ENCODE measurements at regions of chr3 and their contacts with region 1.

Region 1: DNA sequence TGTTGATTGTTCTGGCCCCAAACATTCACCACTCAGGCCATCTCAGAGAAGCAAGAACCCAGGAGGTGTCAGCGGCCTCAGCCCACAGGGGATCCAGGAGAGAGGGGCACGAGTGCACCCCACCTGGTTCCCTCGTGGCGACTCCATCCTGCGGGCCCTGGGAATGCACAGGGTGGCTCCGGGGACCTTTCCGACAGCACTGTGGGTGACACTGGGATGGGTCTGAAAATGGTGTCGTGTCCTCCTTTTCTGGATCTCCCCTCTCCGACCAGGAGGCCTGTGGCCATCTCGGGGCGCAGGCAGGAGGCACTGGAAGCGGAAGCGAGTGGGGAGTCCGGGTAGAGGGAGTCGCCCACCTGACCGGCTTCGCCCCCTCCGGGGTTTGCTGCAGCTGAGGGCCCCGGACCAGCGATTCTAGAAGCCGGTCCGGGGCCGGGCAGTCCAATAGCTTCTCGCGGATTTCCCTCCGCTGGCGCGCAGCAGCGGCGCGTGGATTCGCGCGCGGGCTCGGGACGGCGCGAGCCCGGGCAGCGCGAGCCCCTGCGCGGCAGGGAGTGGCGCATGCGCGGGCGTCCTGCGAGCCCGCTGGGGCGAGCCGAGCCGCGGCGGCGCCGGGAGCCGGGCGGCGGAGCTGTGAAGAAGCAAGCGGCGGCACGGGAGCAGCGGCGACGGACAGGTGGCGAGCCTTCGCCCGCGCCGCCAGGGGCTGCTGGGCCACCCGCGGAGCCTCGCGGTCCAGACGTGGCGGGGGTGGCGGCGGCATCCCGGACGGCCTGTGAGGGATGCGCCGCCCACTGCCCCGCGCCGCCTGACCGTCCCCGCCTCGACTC is at the start of gene DOCK3:
- DNase-seq: peak; percentile 79
- ATAC-seq: peak; percentile 91
- H3K4me3 Mint-ChIP-seq: peak within 1 kb of the TSS; percentile 69
- H3K27ac Mint-ChIP-seq: peak within 1 kb of the TSS; percentile 55
- H3K4me1 Mint-ChIP-seq: peaks cover 10% of the 10 kb centered on the region
- H3K27me3 Mint-ChIP-seq: peaks cover 36% of the 10 kb centered on the region
- total RNA-seq, gene DOCK3: 2.5 to 2.6 TPM

Region 2: DNA sequence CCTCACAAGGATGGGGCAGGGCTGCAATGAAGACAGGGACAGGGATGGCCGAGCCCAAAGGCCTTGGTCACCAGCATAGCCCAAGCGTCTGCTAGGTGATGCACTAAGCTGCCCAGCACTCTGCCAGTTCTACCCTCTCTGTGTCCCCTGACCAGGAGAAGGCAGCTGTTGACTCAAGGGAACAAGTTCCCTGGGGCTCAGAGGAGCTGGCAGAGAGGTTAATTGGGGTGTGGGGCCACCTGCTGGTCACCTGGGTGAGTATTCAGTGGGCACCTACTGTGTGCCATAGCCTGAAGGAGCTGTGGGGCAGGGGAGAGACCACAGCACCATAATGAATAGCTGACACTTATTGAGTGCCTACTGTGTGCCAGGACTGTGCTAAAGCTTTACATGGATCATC is 21.9 kb before region 1 on chr3:
- CTCF ChIA-PET with region 1: interaction called, 14 read pairs
- POLR2A ChIA-PET with region 1: interaction called, 3 read pairs
- intact Hi-C with region 1: no loop called
- DNase-seq: peak; percentile 80
- ATAC-seq: peak; percentile 51
- H3K4me3 Mint-ChIP-seq: no peak overlapping the region
- H3K27ac Mint-ChIP-seq: peak overlapping the region; percentile 7
- H3K4me1 Mint-ChIP-seq: peaks cover 25% of the 10 kb centered on the region
- H3K27me3 Mint-ChIP-seq: no peaks in the 10 kb centered on the region

Region 3: DNA sequence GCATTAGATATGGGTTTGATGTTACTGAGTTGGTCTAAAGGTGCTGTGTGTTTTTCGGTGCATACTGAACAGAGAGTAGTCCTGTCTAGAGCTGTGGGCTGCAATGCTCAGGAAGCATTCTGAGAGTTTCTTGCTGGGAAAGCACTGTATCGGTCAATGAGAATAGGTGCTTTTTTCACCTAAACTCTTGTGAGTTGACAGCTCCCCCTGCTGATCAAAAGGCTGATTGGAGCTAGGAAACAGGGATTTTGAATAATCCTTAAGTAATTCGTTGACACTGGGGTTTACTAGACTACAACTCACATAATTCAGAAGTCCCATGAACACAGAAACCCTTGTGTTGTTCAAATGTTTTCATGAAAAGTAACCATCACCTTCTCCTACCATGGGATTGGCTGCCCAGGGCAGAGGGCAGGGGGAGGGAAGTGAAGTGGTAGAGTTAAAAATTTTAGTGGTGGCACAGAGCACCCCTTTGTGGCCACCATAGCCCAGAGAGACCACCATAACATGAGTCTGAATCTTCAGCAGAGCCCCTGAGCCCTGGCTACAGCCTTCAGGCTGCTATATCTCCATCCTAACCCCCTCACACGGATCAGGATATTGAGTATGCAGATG is 697.5 kb after region 1 on chr3:
- CTCF ChIA-PET with region 1: interaction called, 4 read pairs
- POLR2A ChIA-PET with region 1: no interaction called
- intact Hi-C with region 1: loop called in 1 of 2 experiments (anchors 1 kb)
- DNase-seq: peak; percentile 72
- ATAC-seq: peak; percentile 74
- H3K4me3 Mint-ChIP-seq: no peak overlapping the region
- H3K27ac Mint-ChIP-seq: no peak overlapping the region
- H3K4me1 Mint-ChIP-seq: no peaks in the 10 kb centered on the region
- H3K27me3 Mint-ChIP-seq: peaks cover 3% of the 10 kb centered on the region

Region 4: GRCh38 chr3:51384726-51385473 is 710.3 kb after region 1 on chr3 and contains the start of gene MANF:
- CTCF ChIA-PET with region 1: interaction called, 3 read pairs
- POLR2A ChIA-PET with region 1: no interaction called
- intact Hi-C with region 1: loop called in 1 of 2 experiments (anchors 10 kb)
- DNase-seq: peak; percentile 99
- ATAC-seq: peak; percentile 97
- H3K4me3 Mint-ChIP-seq: peak within 1 kb of the TSS; percentile 93
- H3K27ac Mint-ChIP-seq: peak within 1 kb of the TSS; percentile 99
- H3K4me1 Mint-ChIP-seq: peaks cover 46% of the 10 kb centered on the region
- H3K27me3 Mint-ChIP-seq: no peaks in the 10 kb centered on the region
- total RNA-seq, gene MANF: 124 to 129 TPM

Measured in activated CD4-positive, alpha-beta T cell treated with anti-CD3 and anti-CD28 coated beads for 36 hours (primary cell).